HEK293 (cell line): ENCODE measurements at regions of chr22 and their contacts with region 1.

Region 1: GRCh38 chr22:25202290-25202921 is 2.7 kb downstream of the CRYBB3 start:
- H3K4me3 ChIP-seq: no peak overlapping the region
- H3K27ac ChIP-seq: no peak overlapping the region
- H3K4me1 ChIP-seq: no peaks in the 10 kb centered on the region
- CTCF ChIP-seq: peak; percentile 64

Region 2: GRCh38 chr22:25182131-25183110 is 20.0 kb before region 1 on chr22:
- CTCF ChIA-PET with region 1: interaction called, 36 read pairs
- POLR2A ChIA-PET with region 1: no interaction called
- H3K4me3 ChIP-seq: no peak overlapping the region
- H3K27ac ChIP-seq: no peak overlapping the region
- H3K4me1 ChIP-seq: no peaks in the 10 kb centered on the region
- CTCF ChIP-seq: no peak

Region 3: GRCh38 chr22:25327018-25327755 is 124.8 kb after region 1 on chr22:
- CTCF ChIA-PET with region 1: interaction called, 16 read pairs
- POLR2A ChIA-PET with region 1: no interaction called
- H3K4me3 ChIP-seq: no peak overlapping the region
- H3K27ac ChIP-seq: no peak overlapping the region
- H3K4me1 ChIP-seq: no peaks in the 10 kb centered on the region
- CTCF ChIP-seq: no peak

Region 4: DNA sequence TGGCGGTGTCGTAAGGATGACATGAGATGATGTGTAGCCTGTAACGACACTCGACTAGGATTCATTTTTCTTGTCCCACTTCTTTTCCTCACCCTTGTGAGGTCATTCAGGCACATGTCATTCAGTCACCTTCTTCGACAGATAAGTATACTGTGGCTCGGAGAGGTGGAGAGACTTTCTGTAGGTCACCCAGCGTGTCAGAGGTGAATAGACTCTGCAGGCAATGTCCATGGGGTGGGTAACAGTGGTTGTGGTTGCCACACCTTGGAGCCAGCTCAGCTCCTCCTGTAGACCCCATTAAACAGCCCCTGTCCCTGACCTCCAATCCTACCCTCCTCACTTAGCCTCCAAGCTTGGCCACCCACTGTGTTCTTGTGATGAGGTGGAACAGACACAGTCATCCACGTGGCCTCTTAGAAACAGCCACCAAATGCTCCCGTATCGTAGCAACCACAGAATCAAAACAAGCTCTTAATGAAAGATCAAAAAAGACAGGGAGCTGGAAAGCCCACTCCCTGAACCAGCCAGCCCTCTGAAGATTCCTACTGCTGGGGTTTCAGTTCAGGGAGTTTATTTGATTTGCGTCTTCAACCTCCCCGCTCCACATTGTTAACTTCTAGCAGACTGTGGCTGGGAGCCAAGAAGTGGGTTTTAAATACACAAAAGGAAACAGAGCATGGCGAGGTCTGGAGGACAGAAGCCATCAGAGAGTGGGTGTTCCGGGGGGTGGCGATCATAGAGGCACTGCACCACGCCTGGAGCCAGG is 273.0 kb after region 1 on chr22:
- CTCF ChIA-PET with region 1: no interaction called
- POLR2A ChIA-PET with region 1: no interaction called
- H3K4me3 ChIP-seq: no peak overlapping the region
- H3K27ac ChIP-seq: peak overlapping the region; percentile 3
- H3K4me1 ChIP-seq: peaks cover 8% of the 10 kb centered on the region
- CTCF ChIP-seq: no peak